ENCODE measurements at regions of chr13 and their contacts with region 1.

Region 1: GRCh38 chr13:26872525-26873385 is 112.2 kb upstream of the GPR12 start:
- DNase-seq: peak; percentile 72
- H3K4me3 ChIP-seq: no peak overlapping the region
- H3K27ac ChIP-seq: no peak overlapping the region
- H3K4me1 ChIP-seq: no peaks in the 10 kb centered on the region
- H3K27me3 ChIP-seq: no peaks in the 10 kb centered on the region

Region 2: GRCh38 chr13:26719356-26719945 is 153.3 kb before region 1 on chr13:
- in situ Hi-C with region 1: loop called (anchors 10 kb)
- DNase-seq: peak; percentile 32
- H3K4me3 ChIP-seq: no peak overlapping the region
- H3K27ac ChIP-seq: no peak overlapping the region
- H3K4me1 ChIP-seq: no peaks in the 10 kb centered on the region
- H3K27me3 ChIP-seq: peaks cover 10% of the 10 kb centered on the region; the same call in 1 of the 2 replicates

Region 3: GRCh38 chr13:26813321-26813979 is 59.3 kb before region 1 on chr13:
- in situ Hi-C with region 1: no loop called
- DNase-seq: no peak
- H3K4me3 ChIP-seq: no peak overlapping the region
- H3K27ac ChIP-seq: no peak overlapping the region
- H3K4me1 ChIP-seq: no peaks in the 10 kb centered on the region
- H3K27me3 ChIP-seq: 0 out of 2 replicates have a peak, but pooled peaks cover 11% of the 10 kb centered on the region

Region 4: DNA sequence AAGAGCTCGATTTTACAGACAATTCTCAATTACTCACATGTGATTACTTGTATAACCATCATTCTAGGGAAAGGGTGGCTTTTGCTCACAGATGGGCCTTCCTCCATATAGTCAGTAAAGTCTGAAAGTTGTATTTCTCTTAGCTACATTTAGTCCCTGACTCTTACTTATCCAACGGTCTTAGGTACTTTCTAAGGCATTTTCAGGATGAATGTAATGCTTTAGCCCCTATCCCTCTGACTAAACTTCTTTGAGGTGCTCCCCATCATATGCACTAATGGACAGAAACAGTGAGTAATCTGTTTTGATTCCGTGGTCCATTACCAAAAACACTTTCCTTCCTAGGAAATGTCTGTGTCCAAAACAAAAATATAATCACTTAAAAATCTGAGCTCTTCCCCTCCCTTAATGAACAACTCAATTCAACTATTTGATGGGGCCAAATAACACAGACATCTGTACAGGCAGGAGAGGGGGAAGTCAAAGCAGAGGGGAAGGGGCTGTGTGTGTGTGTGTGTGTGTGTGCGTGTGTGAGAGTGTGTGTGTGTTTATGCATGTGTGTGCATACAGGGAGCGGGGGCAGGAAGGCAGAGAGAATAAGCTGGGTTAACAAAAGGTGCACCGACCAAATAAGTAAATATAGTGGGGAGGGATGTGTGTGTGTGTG is 214.0 kb after region 1 on chr13:
- in situ Hi-C with region 1: no loop called
- DNase-seq: no peak
- H3K4me3 ChIP-seq: no peak overlapping the region
- H3K27ac ChIP-seq: no peak overlapping the region
- H3K4me1 ChIP-seq: no peaks in the 10 kb centered on the region
- H3K27me3 ChIP-seq: no peaks in the 10 kb centered on the region

Measured in GM23248 (cell line).